Natural killer cell (primary cell): ENCODE measurements at regions of chr2 and their contacts with region 1.

Region 1: GRCh38 chr2:189674374-189675112 is at the start of gene ANKAR:
- DNase-seq: peak; percentile 80 to 90
- ATAC-seq: peak; percentile 93 to 98 (median 94)
- H3K4me3 ChIP-seq: peak within 1 kb of the TSS; percentile 87
- H3K4me3 Mint-ChIP-seq: peak within 1 kb of the TSS; percentile 89
- H3K27ac ChIP-seq: peak within 1 kb of the TSS; percentile 99
- H3K27ac Mint-ChIP-seq: peak within 1 kb of the TSS; percentile 92 to 93
- H3K4me1 ChIP-seq: peaks cover 20% of the 10 kb centered on the region
- H3K4me1 Mint-ChIP-seq: peaks cover 40 to 42% of the 10 kb centered on the region in 2 donors
- H3K27me3 ChIP-seq: no peaks in the 10 kb centered on the region
- H3K27me3 Mint-ChIP-seq: no peaks in the 10 kb centered on the region
- CTCF ChIP-seq: peak; percentile 73
- total RNA-seq, gene ANKAR: 12.9 to 18.0 (median 17.4) TPM

Region 2: GRCh38 chr2:189698020-189698887 is 23.7 kb after region 1 on chr2:
- intact Hi-C with region 1: loop called (anchors 1 kb)
- DNase-seq: peak in 1 of 2 donors; percentile 76
- ATAC-seq: peak; percentile 67 to 76 (median 76)
- H3K4me3 ChIP-seq: no peak overlapping the region
- H3K4me3 Mint-ChIP-seq: peak overlapping the region; percentile 49
- H3K27ac ChIP-seq: no peak overlapping the region
- H3K27ac Mint-ChIP-seq: peak overlapping the region; percentile 46 to 65
- H3K4me1 ChIP-seq: no peaks in the 10 kb centered on the region
- H3K4me1 Mint-ChIP-seq: peaks cover 0 to 11% of the 10 kb centered on the region in 2 donors
- H3K27me3 ChIP-seq: no peaks in the 10 kb centered on the region
- H3K27me3 Mint-ChIP-seq: no peaks in the 10 kb centered on the region
- CTCF ChIP-seq: peak; percentile 89

Region 3: GRCh38 chr2:189762551-189763298 is 88.2 kb after region 1 on chr2 and contains the start of gene OSGEPL1:
- intact Hi-C with region 1: loop called (anchors 1 kb)
- DNase-seq: peak; percentile 85 to 96
- ATAC-seq: peak; percentile 91 to 95 (median 93)
- H3K4me3 ChIP-seq: peak within 1 kb of the TSS; percentile 70
- H3K4me3 Mint-ChIP-seq: peak within 1 kb of the TSS; percentile 99
- H3K27ac ChIP-seq: peak within 1 kb of the TSS; percentile 86
- H3K27ac Mint-ChIP-seq: peak within 1 kb of the TSS; percentile 95 to 98
- H3K4me1 ChIP-seq: no peaks in the 10 kb centered on the region
- H3K4me1 Mint-ChIP-seq: peaks cover 6 to 7% of the 10 kb centered on the region in 2 donors
- H3K27me3 ChIP-seq: no peaks in the 10 kb centered on the region
- H3K27me3 Mint-ChIP-seq: no peaks in the 10 kb centered on the region
- CTCF ChIP-seq: peak; percentile 60
- total RNA-seq, gene OSGEPL1: 5.6 to 10.2 (median 8.5) TPM

Region 4: DNA sequence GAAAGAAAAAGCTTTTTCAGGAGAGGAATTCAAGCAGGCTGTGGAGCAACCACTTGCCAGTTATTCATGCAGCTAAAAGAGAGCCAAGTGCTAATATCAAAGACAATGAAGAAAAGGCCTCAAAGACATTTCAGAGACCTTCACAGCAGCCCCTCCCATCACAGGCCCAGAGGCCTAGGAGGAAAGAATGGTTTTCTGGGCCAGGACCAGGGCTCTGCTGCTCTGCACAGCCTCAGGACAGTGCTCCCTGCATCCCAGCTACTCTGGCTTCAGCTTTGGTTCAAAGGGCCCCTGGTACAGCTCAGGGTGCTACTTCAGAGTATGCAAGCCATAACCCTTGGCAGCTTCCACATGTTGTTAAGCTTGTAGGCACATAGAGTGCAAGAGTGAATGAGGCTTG is 268.5 kb after region 1 on chr2:
- intact Hi-C with region 1: no loop called
- DNase-seq: no peak
- ATAC-seq: no peak
- H3K4me3 ChIP-seq: no peak overlapping the region
- H3K4me3 Mint-ChIP-seq: no peak overlapping the region
- H3K27ac ChIP-seq: no peak overlapping the region
- H3K27ac Mint-ChIP-seq: no peak overlapping the region
- H3K4me1 ChIP-seq: no peaks in the 10 kb centered on the region
- H3K4me1 Mint-ChIP-seq: no peaks in the 10 kb centered on the region
- H3K27me3 ChIP-seq: no peaks in the 10 kb centered on the region
- H3K27me3 Mint-ChIP-seq: no peaks in the 10 kb centered on the region
- CTCF ChIP-seq: no peak